Stomach (tissue), 19 donors: ENCODE measurements at regions of chr9 and their contacts with region 1.

Region 1: DNA sequence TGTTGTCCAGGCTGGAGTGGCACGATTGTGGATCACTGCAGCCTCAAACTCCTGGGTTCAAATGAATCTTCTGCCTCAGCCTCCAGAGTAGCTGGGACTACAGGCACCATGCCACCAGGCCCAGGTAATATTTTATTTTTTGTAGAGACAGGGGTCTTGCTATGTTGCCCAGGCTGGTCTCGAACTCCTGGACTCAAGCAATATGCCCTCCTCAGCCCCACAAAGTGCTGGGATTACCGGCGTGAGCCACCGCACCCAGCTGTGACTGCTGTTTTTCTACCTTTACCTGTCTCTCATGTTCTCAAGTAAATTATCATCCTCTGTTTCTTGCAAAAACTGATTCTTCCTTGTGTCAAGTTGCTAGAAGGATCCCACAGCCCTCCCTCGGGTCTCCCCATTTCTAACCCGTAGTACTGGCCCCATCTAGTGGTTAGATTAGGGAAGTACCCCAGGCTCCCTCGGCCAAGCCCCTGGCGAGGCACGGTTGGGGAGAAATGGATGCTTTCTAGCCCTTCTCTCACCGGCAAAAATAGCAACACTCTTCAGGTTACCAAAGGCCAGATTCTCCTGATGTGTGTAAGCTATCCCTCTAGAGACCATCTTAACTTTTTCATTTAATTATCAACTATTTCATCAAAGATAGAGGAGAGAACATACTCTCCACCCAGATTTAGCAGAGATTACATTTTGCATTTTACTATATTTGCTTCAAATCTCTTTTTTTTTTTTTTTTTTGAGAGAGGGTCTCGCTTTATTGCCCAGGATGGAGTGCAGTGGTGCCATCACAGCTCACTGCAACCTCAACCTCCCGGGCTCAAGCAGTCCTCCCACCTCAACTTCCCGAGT is 19.2 kb upstream of the TOR1B start:
- DNase-seq: peak; percentile 73 to 87
- H3K4me3 ChIP-seq: no peak overlapping the region
- H3K27ac ChIP-seq: no peak overlapping the region
- H3K4me1 ChIP-seq: peaks cover 0 to 7% (median 2%) of the 10 kb centered on the region in 4 donors
- H3K27me3 ChIP-seq: peaks cover 0 to 19% (median 11%) of the 10 kb centered on the region in 3 donors
- CTCF ChIP-seq: peak in 5 of 7 experiments; percentile 85 to 95 (median 90)
- EP300 ChIP-seq: no peak
- POLR2A ChIP-seq: no peak

Region 2: GRCh38 chr9:129139993-129140396 is 643.7 kb before region 1 on chr9:
- intact Hi-C with region 1: loop called (anchors 10 kb)
- DNase-seq: peak; percentile 89 to 99
- H3K4me3 ChIP-seq: peak overlapping the region; percentile 38 to 46 (median 44)
- H3K27ac ChIP-seq: peak overlapping the region; percentile 98 to 100 (median 98)
- H3K4me1 ChIP-seq: peaks cover 64 to 79% (median 66%) of the 10 kb centered on the region in 4 donors
- H3K27me3 ChIP-seq: no peaks in the 10 kb centered on the region
- CTCF ChIP-seq: no peak
- EP300 ChIP-seq: peak; percentile 74
- POLR2A ChIP-seq: peak in 2 of 4 donors; percentile 12 to 24

Region 3: DNA sequence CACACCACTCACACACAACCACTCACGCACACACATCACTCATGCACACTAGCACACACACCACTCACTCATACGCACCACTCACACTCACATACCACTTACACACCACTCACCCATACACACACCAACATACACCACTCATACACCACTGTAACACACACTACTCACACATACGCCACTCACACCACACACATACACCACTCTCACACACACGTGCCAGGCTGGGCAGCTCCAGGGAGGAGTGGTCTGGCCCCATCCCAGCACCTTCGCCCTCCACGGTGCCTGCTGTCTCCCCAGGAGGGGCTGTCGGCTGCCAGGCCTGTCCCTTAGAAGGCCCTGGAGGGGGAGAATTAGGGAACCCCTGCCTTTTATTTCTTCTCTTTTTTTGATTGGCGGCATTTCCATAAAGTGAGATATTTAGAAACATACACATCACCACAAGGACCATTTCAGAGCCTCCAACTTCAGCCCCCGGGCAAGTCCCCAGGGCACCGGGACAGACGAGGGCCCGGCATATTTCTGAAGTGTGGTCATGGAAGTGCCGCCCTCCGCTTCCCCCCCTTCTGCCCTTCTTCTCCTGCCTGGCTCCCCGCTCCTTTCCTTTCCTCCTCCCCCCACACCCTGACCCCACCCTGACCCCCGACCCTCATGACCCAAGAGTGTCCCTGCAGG is 135.5 kb before region 1 on chr9:
- intact Hi-C with region 1: loop called (anchors 5 kb)
- DNase-seq: no peak
- H3K4me3 ChIP-seq: no peak overlapping the region
- H3K27ac ChIP-seq: no peak overlapping the region
- H3K4me1 ChIP-seq: no peaks in the 10 kb centered on the region
- H3K27me3 ChIP-seq: no peaks in the 10 kb centered on the region
- CTCF ChIP-seq: no peak
- EP300 ChIP-seq: no peak
- POLR2A ChIP-seq: no peak

Region 4: DNA sequence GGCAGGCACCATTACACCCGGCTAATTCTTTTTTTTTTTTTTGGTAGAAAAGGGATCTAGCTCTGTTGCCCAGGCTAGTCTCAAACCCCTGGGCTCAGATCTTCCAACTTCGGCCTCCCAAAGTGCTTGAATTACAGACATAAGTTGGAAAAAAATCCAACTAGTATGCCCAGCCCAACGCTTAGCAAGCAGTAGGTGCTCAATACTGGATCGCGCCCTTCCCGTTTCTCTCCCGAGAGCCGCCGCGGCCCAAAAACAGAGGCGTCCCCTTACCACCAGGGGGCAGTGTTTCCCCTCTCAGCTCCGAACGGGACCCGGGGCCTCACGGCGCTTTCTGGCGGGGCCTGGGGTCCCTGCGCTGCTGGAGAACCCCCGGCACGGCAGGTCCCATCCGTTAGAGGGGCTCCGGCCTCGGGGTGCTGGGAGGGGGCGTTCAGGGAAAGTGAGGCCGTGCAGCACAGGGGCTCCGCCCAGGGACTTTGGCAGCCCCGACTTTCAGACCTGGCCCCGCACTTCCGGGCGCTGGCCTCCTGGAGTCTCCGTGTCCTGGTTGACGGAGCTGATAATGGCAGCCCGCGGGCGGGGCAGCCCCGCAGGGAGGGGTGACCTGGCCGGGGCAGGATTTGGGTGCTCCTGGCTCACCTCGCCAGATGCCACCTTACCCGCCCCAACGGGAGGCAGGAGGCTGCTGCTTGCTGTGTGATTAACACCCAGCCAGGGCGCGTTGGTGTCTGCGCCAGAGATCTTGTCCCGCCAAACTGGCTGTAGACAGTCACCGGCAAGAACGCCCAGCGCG is 46.1 kb before region 1 on chr9:
- intact Hi-C with region 1: loop called (anchors 5 kb)
- DNase-seq: peak; percentile 92 to 94
- H3K4me3 ChIP-seq: peak overlapping the region; percentile 49 to 68 (median 56)
- H3K27ac ChIP-seq: peak overlapping the region; percentile 50 to 83 (median 76)
- H3K4me1 ChIP-seq: peaks cover 0 to 13% (median 9%) of the 10 kb centered on the region in 4 donors
- H3K27me3 ChIP-seq: peaks cover 0 to 17% (median 4%) of the 10 kb centered on the region in 3 donors
- CTCF ChIP-seq: peak in 6 of 7 experiments; percentile 85 to 99 (median 97)
- EP300 ChIP-seq: no peak
- POLR2A ChIP-seq: no peak

Region 5: DNA sequence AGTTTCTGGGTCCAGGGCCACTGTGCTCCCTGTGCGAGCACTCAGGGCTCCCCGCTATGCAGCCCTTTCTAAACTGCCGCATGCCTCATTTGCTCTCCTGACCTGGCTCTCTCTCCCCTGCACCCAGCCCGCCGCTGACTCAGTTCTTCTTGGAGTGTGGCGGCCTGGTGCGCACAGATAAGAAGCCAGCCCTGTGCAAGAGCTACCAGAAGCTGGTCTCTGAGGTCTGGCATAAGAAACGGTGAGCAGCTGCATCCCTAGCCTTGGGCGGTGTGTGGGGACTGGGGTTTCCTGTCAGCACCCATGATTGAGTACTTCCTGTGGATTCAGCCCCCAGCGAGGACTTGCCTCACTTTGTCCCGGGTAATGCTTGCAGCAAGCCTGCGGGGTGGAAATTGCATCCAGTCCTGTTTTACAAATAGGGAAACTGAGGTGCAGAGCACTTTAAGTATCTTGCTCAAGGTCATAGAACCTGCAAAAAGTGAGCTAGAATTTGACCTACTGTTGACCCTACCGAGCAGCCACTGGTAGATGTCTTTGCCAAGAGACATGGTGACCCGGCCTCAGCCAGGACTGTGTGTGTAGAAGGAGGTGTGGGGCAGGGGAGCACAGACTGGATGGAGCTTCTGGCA is 79.4 kb after region 1 on chr9:
- intact Hi-C with region 1: no loop called
- DNase-seq: peak; percentile 34 to 59
- H3K4me3 ChIP-seq: no peak overlapping the region
- H3K27ac ChIP-seq: peak overlapping the region in 1 of 5 donors; percentile 26
- H3K4me1 ChIP-seq: no peaks in the 10 kb centered on the region
- H3K27me3 ChIP-seq: no peaks in the 10 kb centered on the region
- CTCF ChIP-seq: no peak
- EP300 ChIP-seq: no peak
- POLR2A ChIP-seq: no peak

Region 6: DNA sequence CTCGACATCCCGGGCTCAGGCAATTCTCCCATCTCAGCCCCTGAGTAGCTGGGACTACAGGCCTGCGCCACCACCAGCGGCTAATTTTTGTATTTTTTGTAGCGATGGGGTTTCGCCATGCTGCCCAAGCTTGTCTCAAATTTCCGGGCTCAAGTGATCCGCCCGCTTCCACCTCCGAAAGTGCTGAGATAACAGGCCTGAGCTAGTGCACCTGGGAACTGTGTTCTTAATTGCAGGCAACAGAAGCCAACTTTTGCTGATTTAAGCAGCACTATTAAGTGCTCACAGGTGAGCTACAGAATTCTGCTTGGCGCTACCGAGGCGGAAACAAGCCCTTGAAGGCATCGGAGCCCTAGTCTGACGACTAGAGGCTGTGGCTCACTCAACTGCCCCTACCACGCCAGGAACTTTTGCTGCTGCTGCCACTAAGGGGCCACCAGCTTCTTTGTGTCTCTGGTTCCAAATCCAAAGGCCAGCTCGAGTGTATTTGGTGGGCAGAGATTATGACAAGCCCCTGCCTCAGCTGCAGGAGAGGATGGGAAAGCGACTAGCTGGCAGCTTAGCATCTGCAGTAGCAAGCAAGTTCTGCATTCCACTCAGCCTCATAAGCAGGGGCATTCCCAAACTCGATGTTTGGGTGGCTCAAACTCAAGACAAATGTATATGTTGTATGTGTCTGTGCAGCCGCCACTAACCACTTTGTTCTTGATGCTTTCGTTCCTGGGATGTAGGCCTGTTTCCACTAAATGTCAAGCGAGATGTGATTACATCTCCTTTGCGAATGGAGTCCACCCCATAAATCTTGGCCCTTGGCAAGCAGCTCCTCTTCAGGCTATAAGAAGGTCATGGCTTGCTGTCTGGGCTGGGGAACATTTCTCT is 471.3 kb after region 1 on chr9:
- intact Hi-C with region 1: no loop called
- DNase-seq: peak in 1 of 2 donors; percentile 81
- H3K4me3 ChIP-seq: no peak overlapping the region
- H3K27ac ChIP-seq: no peak overlapping the region
- H3K4me1 ChIP-seq: no peaks in the 10 kb centered on the region
- H3K27me3 ChIP-seq: peaks cover 0 to 26% (median 5%) of the 10 kb centered on the region in 3 donors
- CTCF ChIP-seq: no peak
- EP300 ChIP-seq: no peak
- POLR2A ChIP-seq: no peak